Posterior cingulate gyrus (tissue), 11 donors: ENCODE measurements at regions of chr1 and their contacts with region 1.

Region 1: GRCh38 chr1:247487057-247487456 is 29.2 kb upstream of the OR2B11 start:
- DNase-seq: peak in 3 of 10 donors; percentile 4 to 45 (median 11)

Region 2: DNA sequence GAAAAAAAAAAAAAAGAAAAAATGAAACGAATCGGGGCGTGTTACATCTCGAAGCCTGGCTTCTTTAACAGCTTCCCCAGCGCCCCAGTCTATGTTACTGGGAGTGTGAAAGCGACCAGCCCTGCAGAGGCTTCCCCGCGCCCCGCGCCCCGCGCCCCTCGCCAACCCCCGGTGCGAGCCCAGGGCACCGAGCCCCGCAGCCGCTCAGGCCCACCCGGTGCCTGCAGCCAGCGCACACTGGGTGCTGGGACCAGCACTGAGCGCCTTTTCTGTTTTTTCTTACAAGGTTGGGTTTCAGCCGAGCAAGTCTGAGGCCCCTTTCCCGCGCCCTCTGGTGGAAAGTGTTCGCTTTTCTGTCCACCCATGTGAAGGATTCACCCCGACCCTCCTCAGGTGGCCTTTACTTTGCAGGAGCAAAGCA is 113.3 kb before region 1 on chr1:
- intact Hi-C with region 1: loop called (anchors 1 kb)
- DNase-seq: peak in 7 of 10 donors; percentile 16 to 89 (median 52)

Region 3: DNA sequence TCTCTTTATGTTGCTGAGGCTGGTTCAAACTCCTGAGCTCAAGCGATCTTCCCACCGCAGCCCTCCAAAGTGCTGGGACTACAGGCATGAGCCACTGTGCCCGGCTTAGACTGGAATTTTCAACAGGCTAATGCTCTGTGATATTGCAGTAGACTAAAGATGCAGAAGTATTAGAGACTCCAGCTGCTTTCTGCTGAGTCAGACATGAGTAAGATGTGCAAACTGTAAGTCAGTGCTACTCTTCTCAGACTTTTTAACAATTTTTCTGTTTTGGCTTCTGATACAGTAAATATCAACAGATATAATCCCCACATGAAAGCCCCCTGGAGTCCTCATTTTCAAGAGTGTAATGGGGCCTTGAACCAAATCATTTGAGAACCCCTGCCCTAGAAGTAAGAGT is 100.4 kb before region 1 on chr1:
- intact Hi-C with region 1: loop called (anchors 5 kb)
- DNase-seq: no peak

Region 4: DNA sequence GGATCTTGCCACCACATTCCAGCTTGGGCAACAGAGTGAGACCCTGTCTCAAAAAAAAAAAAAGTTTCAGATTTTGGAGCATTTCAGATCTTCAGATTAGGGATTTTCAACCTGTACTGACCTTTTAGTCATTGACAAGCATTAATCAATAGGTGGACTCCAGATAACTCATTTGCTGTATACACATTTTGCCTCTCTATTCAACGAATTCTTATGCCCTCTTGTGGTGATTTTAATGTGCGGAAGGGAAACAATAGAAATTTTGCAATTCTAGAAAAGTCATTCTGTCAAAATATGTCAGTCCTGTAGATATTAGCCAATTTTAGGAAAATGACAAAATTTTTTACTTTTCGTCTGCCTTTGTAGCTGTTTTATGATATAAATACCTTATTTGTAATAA is 89.4 kb after region 1 on chr1:
- intact Hi-C with region 1: no loop called
- DNase-seq: no peak